AG04449 (cell line): ENCODE measurements at regions of chr15 and their contacts with region 1.

Region 1: GRCh38 chr15:40893733-40894688 is at the start of gene VPS18:
- DNase-seq: peak; percentile 71
- H3K4me3 ChIP-seq: peak within 1 kb of the TSS; percentile 95
- CTCF ChIP-seq: peak; percentile 90

Region 2: DNA sequence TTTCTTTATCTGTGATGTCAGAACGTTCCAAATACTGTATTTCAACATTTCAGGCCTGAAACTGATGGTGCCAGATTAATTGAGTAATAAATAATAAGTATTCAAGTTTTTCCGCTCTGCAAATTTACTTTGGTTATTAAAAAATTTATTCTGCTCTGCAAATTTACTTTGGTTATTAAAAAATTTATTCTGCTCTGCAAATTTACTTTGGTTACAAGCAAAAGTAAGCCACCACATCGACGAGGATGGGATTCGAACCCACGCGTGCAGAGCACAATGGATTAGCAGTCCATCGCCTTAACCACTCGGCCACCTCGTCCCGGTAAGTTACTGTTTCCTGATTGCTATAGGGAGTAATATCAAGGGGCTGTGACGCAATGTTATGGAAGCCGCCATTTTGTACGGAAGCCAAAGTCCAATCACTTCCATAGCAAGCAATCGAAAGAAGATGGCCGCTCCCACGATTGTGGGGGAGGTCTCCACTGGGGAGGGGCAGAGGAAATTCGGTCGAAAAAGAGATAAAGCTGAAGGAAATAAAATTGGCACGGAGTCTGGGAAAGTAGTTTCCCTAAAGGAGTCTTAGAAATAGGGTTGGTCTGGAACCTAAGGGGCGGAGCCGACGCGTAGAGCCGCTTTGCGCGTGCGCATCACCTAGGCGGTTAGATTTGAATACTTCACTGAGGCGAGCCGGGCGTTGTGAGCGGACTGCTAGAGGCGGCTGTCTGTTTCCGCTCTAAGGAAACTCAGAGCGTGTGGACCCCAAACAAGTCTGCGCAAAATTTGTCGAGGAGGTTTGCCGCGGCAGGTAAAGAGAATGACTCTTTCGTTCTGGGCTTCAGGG is 300.2 kb before region 1 on chr15 and contains the start of gene KNL1:
- CTCF ChIA-PET with region 1: interaction called, 27 read pairs
- POLR2A ChIA-PET with region 1: no interaction called
- DNase-seq: peak; percentile 60
- H3K4me3 ChIP-seq: peak within 1 kb of the TSS; percentile 87
- CTCF ChIP-seq: no peak

Region 3: DNA sequence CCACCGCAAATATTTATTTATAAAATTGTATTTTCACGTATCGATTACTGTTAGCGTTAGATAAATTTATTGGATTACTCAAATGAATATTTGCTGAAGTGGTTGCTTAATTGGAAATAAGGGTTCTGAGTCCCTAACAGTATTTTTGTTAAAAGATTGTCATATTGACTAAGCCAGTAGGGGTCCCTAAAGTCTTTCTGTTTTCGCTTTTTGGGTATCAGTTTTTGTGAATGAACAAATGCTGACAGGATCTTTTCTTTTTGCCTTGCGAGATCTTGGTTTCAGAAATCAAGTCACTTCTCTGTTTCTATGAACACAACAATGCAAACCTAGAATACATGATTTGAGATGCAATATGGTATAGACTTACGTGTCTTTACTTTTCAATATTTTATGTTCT is 191.9 kb before region 1 on chr15:
- CTCF ChIA-PET with region 1: interaction called, 10 read pairs
- POLR2A ChIA-PET with region 1: no interaction called
- DNase-seq: no peak
- H3K4me3 ChIP-seq: no peak overlapping the region
- CTCF ChIP-seq: no peak

Region 4: DNA sequence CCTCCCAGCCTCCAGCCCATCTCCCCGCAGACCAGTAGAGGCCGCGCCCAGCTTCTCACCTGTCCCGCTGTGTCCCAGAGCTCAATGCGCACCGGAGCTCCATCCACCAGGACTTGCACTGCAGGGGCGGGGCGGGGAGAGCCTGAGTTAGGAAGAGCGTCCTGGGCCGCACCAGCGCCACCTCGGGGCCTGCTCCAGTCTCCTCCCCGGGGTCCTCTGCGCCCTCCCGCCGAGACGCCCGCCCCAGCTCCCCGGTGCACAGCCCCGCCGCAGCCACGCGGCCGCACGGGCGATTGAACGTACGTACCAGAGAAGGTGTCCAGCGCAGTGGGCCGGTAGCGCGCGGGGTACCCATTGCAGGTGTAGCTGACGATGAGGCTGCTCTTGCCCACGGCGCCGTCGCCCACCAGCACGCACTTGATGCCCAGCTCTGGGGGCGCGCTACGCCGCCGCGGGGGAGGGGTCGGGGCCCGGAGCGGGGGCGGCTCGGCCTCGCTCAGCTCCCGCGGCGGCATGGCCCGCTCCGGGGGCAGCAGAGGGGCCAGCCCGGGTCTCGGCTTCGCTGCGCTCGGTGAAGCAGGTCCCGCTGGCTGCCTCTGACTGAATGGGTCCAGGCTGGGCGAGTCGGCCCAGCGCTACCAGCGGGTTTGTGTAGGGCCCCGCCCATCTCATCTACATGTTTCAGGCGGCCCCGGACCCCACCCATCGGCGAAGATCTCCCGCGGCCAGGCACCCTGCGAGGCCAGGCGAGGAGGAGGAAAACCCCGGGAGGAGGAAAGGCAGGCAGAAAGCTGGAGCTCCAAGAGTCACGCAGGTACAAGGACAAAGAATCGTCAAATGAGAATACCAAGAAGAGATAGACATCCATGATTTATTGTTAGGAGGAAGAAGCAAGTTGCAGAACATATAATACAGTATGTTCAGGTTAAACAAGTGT is 20.1 kb before region 1 on chr15 and contains the start of gene RHOV:
- CTCF ChIA-PET with region 1: interaction called, 34 read pairs
- POLR2A ChIA-PET with region 1: no interaction called
- DNase-seq: no peak
- H3K4me3 ChIP-seq: peak within 1 kb of the TSS; percentile 54
- CTCF ChIP-seq: peak; percentile 54

Region 5: DNA sequence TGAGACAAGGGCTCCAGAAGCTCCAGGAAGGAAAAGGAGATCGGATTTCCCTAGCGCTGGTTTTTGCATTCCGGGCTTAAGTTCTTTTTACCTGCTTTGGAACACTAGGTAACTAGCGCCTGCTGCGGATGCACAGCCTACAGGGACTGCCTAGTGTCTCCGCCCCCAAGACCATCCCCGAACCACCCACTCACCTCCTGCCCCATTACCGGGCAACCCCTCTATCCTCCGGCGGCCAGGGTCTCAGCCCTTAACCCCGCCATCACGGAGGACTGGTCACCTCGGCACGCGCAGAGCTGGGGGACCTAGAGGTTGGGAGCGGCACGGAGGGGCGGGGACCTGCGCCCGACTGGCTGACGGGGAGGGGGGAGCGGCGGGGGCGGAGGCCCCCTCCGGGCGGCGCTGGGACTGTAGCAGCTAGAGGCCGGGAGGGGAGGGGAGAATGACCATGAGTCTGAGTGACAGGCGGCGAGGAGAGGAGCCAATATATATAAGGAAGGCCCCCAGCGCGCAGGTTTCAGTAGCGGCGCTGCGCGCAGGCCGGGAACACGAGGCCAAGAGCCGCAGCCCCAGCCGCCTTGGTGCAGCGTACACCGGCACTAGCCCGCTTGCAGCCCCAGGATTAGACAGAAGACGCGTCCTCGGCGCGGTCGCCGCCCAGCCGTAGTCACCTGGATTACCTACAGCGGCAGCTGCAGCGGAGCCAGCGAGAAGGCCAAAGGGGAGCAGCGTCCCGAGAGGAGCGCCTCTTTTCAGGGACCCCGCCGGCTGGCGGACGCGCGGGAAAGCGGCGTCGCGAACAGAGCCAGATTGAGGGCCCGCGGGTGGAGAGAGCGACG is 35.0 kb after region 1 on chr15 and contains the start of gene DLL4:
- CTCF ChIA-PET with region 1: interaction called, 10 read pairs
- POLR2A ChIA-PET with region 1: no interaction called
- DNase-seq: no peak
- H3K4me3 ChIP-seq: peak within 1 kb of the TSS; percentile 48
- CTCF ChIP-seq: no peak